ENCODE measurements at regions of chr7 and their contacts with region 1.

Region 1: DNA sequence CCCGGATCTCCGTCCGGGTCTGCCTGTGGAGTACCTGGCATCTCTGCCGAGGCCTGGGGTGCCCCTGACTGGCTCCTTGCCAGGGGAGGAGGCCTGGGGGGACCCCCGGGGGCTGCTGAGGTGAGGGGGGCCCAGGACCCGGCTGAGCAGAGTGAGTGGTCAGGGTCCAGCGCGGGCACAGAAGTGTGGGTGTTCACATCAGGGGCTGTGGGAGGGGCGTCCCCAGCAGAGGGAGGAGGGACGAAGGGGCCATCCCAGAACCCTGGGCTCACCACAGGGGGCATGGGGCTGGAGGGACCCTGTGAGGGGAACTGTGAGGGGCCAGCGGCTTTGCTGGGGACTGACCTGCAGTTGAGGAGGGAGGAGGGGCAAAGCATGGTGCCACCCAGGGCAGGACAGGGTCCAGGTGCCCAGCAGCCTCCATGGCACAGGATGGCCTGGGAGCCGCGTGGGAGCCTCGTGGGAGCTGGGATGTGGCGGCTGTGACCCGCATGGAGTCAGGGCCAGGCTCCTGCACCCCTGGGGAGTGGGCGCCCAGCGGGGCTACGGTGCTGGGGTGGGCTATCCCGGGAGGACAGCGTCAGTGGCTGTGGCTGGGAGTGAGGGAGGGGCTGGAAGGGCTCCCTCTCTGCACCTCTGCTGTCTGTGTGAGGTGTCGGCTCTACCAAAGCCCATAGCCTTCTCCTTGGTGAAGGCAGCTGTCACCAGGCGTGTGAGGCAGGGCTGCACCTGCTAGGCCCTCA is 91.2 kb downstream of the DNAJB6 start:
- DNase-seq: no peak
- H3K4me3 ChIP-seq: no peak overlapping the region
- H3K27ac ChIP-seq: no peak overlapping the region
- H3K4me1 ChIP-seq: no peaks in the 10 kb centered on the region
- H3K27me3 ChIP-seq: no peaks in the 10 kb centered on the region
- CTCF ChIP-seq: no peak

Region 2: GRCh38 chr7:157155959-157156358 is 272.0 kb before region 1 on chr7:
- CTCF ChIA-PET with region 1: no interaction called
- POLR2A ChIA-PET with region 1: interaction called, 11 read pairs
- intact Hi-C with region 1: no loop called
- DNase-seq: no peak
- H3K4me3 ChIP-seq: no peak overlapping the region
- H3K27ac ChIP-seq: no peak overlapping the region
- H3K4me1 ChIP-seq: no peaks in the 10 kb centered on the region
- H3K27me3 ChIP-seq: no peaks in the 10 kb centered on the region
- CTCF ChIP-seq: no peak

Region 3: GRCh38 chr7:157587805-157588560 is 160.0 kb after region 1 on chr7:
- CTCF ChIA-PET with region 1: no interaction called
- POLR2A ChIA-PET with region 1: no interaction called
- intact Hi-C with region 1: no loop called
- DNase-seq: no peak
- H3K4me3 ChIP-seq: no peak overlapping the region
- H3K27ac ChIP-seq: no peak overlapping the region
- H3K4me1 ChIP-seq: no peaks in the 10 kb centered on the region
- H3K27me3 ChIP-seq: peaks cover 100% of the 10 kb centered on the region
- CTCF ChIP-seq: no peak